ENCODE measurements at regions of chr2 and their contacts with region 1.

Region 1: GRCh38 chr2:101341901-101342624 is 33.6 kb upstream of the RNF149 start:
- DNase-seq: peak; percentile 64 to 76
- ATAC-seq: peak; percentile 77 to 93
- H3K4me3 ChIP-seq: no peak overlapping the region
- H3K27ac ChIP-seq: peak overlapping the region in 1 of 2 experiments; percentile 53; a peak in 1 of 6 replicates
- H3K4me1 ChIP-seq: 0 out of 3 replicates have a peak, but pooled peaks cover 3% of the 10 kb centered on the region
- CTCF ChIP-seq: peak; percentile 88
- EP300 ChIP-seq: no peak
- POLR2A ChIP-seq: no peak
- RAD21 ChIP-seq: peak; percentile 90

Region 2: DNA sequence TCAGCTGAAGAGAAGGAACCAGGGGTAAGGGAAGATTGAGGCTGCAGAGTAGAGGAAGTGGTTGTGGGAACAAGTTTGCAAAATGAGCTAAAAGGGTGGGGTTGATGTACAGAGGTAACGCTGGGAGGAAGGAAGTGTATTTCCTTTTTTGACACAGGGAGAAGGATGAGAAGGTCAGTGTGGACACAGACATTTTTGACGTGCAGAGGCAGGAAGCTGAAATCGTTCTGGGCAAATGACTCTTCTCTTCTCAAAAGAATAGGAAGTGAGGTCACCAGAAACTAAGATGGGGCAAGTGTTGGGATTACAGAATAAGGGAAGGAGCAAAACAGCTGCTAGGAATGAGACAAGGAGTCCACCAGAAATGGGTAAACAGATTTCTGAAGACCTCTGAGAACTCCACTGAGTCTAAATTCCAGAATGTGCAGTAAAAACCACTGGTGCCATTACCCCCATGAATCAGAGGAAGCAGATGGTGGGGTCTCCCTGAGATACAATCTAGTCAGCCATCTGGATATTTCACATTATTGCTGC is 13.5 kb before region 1 on chr2:
- CTCF ChIA-PET with region 1: interaction called, 26 read pairs
- POLR2A ChIA-PET with region 1: no interaction called
- DNase-seq: no peak
- ATAC-seq: no peak
- H3K4me3 ChIP-seq: no peak overlapping the region
- H3K27ac ChIP-seq: no peak overlapping the region
- H3K4me1 ChIP-seq: no peaks in the 10 kb centered on the region
- CTCF ChIP-seq: no peak
- EP300 ChIP-seq: no peak
- POLR2A ChIP-seq: no peak
- RAD21 ChIP-seq: no peak

Region 3: GRCh38 chr2:101387151-101387807 is 45.2 kb after region 1 on chr2 and contains the start of gene CREG2:
- CTCF ChIA-PET with region 1: interaction called, 33 read pairs
- POLR2A ChIA-PET with region 1: interaction called, 3 read pairs
- DNase-seq: peak; percentile 65 to 73
- ATAC-seq: peak; percentile 95
- H3K4me3 ChIP-seq: peak within 1 kb of the TSS; percentile 64
- H3K27ac ChIP-seq: peak within 1 kb of the TSS; percentile 57 to 80
- H3K4me1 ChIP-seq: peaks cover 9% of the 10 kb centered on the region; the same call in 2 of the 3 replicates
- CTCF ChIP-seq: peak; percentile 81
- EP300 ChIP-seq: no peak
- POLR2A ChIP-seq: peak; percentile 34; the same call in 1 of the 2 replicates
- RAD21 ChIP-seq: peak; percentile 23 to 62; a peak in 3 of 5 replicates
- polyA plus RNA-seq, gene CREG2: 1.5 and 2.4 TPM in 2 replicates

Region 4: GRCh38 chr2:101410716-101411211 is 68.7 kb after region 1 on chr2:
- CTCF ChIA-PET with region 1: interaction called, 10 read pairs
- POLR2A ChIA-PET with region 1: no interaction called
- DNase-seq: peak in 1 of 2 experiments; percentile 48
- ATAC-seq: peak in 1 of 2 experiments; percentile 37; a peak in 3 of 6 replicates
- H3K4me3 ChIP-seq: no peak overlapping the region
- H3K27ac ChIP-seq: no peak overlapping the region
- H3K4me1 ChIP-seq: no peaks in the 10 kb centered on the region
- CTCF ChIP-seq: no peak
- EP300 ChIP-seq: no peak
- POLR2A ChIP-seq: no peak
- RAD21 ChIP-seq: no peak

Region 5: DNA sequence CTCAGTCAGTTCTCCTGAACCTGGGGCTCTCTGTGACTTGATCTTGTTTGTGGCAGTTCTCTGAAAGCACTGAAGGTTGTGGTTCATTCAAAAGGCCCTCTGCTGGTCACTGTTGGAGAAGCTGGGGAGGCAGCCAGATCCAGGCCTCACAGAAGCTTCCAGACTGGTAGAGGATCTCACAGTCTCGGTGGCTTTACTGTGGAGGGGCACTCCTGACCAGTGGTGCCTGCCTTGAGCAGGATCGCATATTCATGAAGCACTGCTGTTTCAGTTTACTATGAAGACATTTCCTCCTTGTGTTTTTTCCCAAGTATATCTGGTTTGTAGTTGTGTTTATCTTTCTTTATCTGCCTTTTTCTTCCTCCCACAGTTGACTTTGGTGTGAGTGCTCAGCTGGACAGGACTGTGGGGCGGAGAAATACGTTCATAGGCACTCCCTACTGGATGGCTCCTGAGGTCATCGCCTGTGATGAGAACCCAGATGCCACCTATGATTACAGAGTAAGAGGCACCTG is 489.3 kb after region 1 on chr2:
- CTCF ChIA-PET with region 1: interaction called, 25 read pairs
- POLR2A ChIA-PET with region 1: no interaction called
- DNase-seq: peak; percentile 46 to 78
- ATAC-seq: peak; percentile 92 to 94
- H3K4me3 ChIP-seq: no peak overlapping the region
- H3K27ac ChIP-seq: peak overlapping the region; percentile 23 to 70; a peak in 5 of 6 replicates
- H3K4me1 ChIP-seq: peaks cover 44% of the 10 kb centered on the region
- CTCF ChIP-seq: peak; percentile 84
- EP300 ChIP-seq: no peak
- POLR2A ChIP-seq: no peak
- RAD21 ChIP-seq: peak; percentile 75 to 79

Measured in A549 (cell line).